ENCODE measurements at regions of chr1 and their contacts with region 1.

Region 1: DNA sequence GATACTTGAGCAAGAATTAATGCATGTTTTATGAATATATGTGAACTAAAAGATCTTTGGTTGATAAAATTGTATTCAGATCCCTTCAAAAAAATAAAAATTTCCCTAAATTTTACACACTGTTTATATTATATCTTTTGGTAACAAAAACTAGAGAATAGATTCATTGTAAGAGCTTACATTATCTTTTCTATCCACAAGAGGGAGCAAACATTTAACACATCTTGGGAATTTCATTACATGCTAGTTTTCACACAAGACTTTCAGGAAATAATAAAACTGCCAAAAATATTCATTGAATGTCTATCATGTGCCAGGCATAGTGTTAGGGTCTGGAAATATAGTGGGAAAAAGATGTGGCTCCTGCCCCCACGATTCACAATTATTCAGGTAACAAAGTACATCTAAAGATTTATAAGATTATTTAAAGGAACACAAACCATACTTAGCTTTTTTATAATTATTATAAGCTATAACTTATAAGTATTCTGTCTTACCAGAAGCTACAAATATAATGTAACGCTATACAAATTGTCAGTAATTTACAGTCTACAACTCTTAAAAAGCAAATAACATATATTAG is 30.6 kb downstream of the FAF1 start:
- H3K4me3 ChIP-seq: no peak overlapping the region
- H3K27ac ChIP-seq: no peak overlapping the region
- H3K4me1 ChIP-seq: no peaks in the 10 kb centered on the region
- CTCF ChIP-seq: no peak

Region 2: DNA sequence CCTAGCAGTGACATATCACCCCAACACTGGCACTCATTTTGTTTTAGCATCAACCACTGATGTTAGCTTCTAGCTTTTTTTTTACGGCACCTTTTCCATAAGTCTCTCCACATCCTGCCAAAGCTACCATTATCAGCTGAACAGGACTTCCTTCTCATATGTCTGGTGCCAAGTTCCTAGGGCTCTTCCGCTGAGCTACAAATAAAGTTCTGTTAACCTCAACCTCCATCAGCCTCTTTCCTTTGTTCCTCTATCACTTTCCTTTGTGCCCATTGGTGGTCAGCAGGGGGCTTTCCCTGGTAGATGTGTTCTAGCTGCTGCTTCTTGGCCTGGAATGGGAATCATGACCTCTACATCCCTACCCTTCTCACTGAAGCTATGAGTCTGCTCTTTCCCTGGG is 133.2 kb before region 1 on chr1:
- CTCF ChIA-PET with region 1: no interaction called
- POLR2A ChIA-PET with region 1: no interaction called
- H3K4me3 ChIP-seq: no peak overlapping the region
- H3K27ac ChIP-seq: no peak overlapping the region
- H3K4me1 ChIP-seq: no peaks in the 10 kb centered on the region
- CTCF ChIP-seq: no peak

Region 3: GRCh38 chr1:50955116-50955515 is 25.6 kb after region 1 on chr1:
- CTCF ChIA-PET with region 1: interaction called, 15 read pairs
- POLR2A ChIA-PET with region 1: interaction called, 6 read pairs
- H3K4me3 ChIP-seq: no peak overlapping the region
- H3K27ac ChIP-seq: no peak overlapping the region
- H3K4me1 ChIP-seq: no peaks in the 10 kb centered on the region
- CTCF ChIP-seq: no peak

Region 4: GRCh38 chr1:50959913-50960844 is 30.7 kb after region 1 on chr1 and contains the start of gene FAF1:
- CTCF ChIA-PET with region 1: interaction called, 15 read pairs
- POLR2A ChIA-PET with region 1: interaction called, 6 read pairs
- H3K4me3 ChIP-seq: peak within 1 kb of the TSS; percentile 99
- H3K27ac ChIP-seq: peak within 1 kb of the TSS; percentile 87
- H3K4me1 ChIP-seq: no peaks in the 10 kb centered on the region
- CTCF ChIP-seq: peak; percentile 96

Region 5: GRCh38 chr1:50968158-50968820 is 38.8 kb after region 1 on chr1:
- CTCF ChIA-PET with region 1: interaction called, 12 read pairs
- POLR2A ChIA-PET with region 1: interaction called, 7 read pairs
- H3K4me3 ChIP-seq: peak overlapping the region; percentile 91
- H3K27ac ChIP-seq: peak overlapping the region; percentile 99
- H3K4me1 ChIP-seq: peaks cover 2% of the 10 kb centered on the region; the same call in 1 of the 2 replicates
- CTCF ChIP-seq: peak; percentile 83